ENCODE measurements at regions of chr17 and their contacts with region 1.

Region 1: GRCh38 chr17:17280613-17281549 is at the start of gene COPS3:
- DNase-seq: peak; percentile 96 to 98 (median 97)
- H3K4me3 ChIP-seq: peak within 1 kb of the TSS; percentile 62 to 99
- H3K4me3 Mint-ChIP-seq: peak within 1 kb of the TSS; percentile 90 to 96 (median 94)
- H3K27ac ChIP-seq: peak within 1 kb of the TSS; percentile 89
- H3K27ac Mint-ChIP-seq: peak within 1 kb of the TSS; percentile 93 to 98 (median 96)
- H3K4me1 ChIP-seq: peaks cover 33% of the 10 kb centered on the region
- H3K4me1 Mint-ChIP-seq: peaks cover 24 to 55% (median 40%) of the 10 kb centered on the region in 4 donors
- H3K27me3 ChIP-seq: no peaks in the 10 kb centered on the region
- H3K27me3 Mint-ChIP-seq: no peaks in the 10 kb centered on the region
- total RNA-seq, gene COPS3: 45.4 to 60.5 TPM

Region 2: GRCh38 chr17:16568541-16569357 is 712.1 kb before region 1 on chr17 and contains the start of gene ZNF287:
- CTCF ChIA-PET with region 1: no interaction called
- POLR2A ChIA-PET with region 1: no interaction called
- intact Hi-C with region 1: loop called (anchors 2 kb)
- DNase-seq: peak; percentile 91 to 96 (median 93)
- H3K4me3 ChIP-seq: peak within 1 kb of the TSS; percentile 33 to 87
- H3K4me3 Mint-ChIP-seq: peak within 1 kb of the TSS; percentile 85 to 89 (median 86)
- H3K27ac ChIP-seq: peak within 1 kb of the TSS; percentile 38
- H3K27ac Mint-ChIP-seq: peak within 1 kb of the TSS; percentile 79 to 98 (median 96)
- H3K4me1 ChIP-seq: peaks cover 14% of the 10 kb centered on the region
- H3K4me1 Mint-ChIP-seq: peaks cover 8 to 19% (median 12%) of the 10 kb centered on the region in 4 donors
- H3K27me3 ChIP-seq: no peaks in the 10 kb centered on the region
- H3K27me3 Mint-ChIP-seq: peaks cover 2 to 3% of the 10 kb centered on the region in 2 donors
- total RNA-seq, gene ZNF287: 16.7 to 17.9 TPM

Region 3: DNA sequence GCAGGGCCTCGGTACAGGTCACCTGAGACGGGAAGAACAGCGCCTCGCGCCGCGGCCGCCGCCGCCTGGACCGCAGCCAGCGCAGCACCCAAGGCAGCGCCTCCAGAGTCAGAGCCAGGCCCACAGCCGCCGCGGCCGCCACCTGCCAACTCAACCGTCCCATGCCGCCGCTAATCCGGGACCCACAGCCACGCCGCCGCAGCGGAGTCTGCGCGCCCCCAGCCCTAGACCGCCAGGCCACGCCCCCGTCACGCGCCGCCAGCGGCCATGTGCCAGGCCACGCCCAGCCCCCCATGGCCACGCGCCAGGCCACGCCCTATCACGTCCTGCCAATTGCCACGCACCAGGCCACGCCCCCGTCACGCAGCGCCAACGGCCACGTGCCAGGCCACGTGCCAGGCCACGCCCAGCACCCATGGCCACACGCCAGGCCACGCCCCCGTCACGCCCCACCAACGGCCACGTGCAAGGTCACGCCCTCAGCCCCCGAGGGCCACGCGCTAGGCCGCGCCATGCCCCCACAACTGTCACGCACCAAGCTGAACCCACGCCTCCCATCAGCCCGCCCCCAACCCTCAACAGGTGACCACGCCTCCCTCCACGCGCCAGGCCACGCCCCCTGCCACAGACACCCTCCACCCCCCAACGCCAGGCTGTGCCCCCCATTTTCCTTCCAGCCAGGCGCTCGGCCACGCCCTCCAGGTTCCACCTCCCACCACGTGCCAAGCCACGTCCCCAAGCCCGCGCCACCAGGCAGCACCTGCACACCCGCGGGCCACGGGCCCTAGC is 74.6 kb before region 1 on chr17 and contains the start of gene PLD6:
- CTCF ChIA-PET with region 1: no interaction called
- POLR2A ChIA-PET with region 1: no interaction called
- intact Hi-C with region 1: loop called (anchors 2 kb)
- DNase-seq: peak; percentile 94 to 95 (median 95)
- H3K4me3 ChIP-seq: peak within 1 kb of the TSS; percentile 61 to 72
- H3K4me3 Mint-ChIP-seq: peak within 1 kb of the TSS; percentile 85 to 94 (median 90)
- H3K27ac ChIP-seq: peak within 1 kb of the TSS; percentile 72
- H3K27ac Mint-ChIP-seq: peak within 1 kb of the TSS; percentile 91 to 97 (median 96)
- H3K4me1 ChIP-seq: peaks cover 28% of the 10 kb centered on the region
- H3K4me1 Mint-ChIP-seq: peaks cover 14 to 44% (median 31%) of the 10 kb centered on the region in 4 donors
- H3K27me3 ChIP-seq: no peaks in the 10 kb centered on the region
- H3K27me3 Mint-ChIP-seq: no peaks in the 10 kb centered on the region
- total RNA-seq, gene PLD6: 12.8 to 13.9 TPM

Region 4: DNA sequence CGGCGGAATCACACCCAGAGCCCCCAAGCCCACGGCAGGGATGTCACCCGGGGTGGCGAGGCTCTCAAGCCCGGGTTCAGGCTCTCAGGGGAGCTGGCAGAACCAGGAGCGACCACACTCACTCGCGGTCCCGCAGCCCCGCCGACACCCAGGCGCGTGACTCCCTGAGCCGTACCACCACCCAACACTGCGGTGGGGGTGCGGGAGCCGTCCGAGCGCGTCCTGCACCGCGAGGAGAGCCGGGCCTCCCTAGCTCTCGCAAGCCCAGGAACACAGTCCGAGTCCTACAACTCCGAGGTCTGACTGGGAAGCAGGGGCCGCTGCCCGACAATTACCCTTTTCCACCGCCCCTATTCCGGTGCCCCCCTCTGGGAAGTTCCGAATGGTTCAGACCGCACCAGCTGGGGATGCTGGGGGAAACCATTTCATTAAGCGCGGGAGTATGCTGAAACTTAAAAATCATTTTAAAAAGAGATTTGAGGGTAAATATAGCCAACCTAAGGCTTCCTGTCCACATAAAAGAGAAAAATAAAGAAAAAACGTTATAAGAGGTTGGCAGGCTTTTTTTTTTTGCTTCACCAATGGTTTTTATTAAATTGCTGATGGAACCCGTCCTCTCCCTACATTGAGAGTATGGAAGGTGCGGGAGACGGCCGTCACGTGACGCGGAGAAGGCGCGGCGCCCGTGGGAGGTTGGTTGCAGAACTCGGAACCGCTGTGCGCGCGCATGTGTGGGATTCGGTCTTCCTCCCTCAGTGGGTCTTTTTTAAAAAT is 43.7 kb before region 1 on chr17 and contains the start of gene FLCN:
- CTCF ChIA-PET with region 1: no interaction called
- POLR2A ChIA-PET with region 1: interaction called, 16 read pairs
- intact Hi-C with region 1: loop called (anchors 2 kb)
- DNase-seq: peak; percentile 91 to 95 (median 92)
- H3K4me3 ChIP-seq: peak within 1 kb of the TSS; percentile 79 to 82
- H3K4me3 Mint-ChIP-seq: peak within 1 kb of the TSS; percentile 90 to 97 (median 95)
- H3K27ac ChIP-seq: peak within 1 kb of the TSS; percentile 94
- H3K27ac Mint-ChIP-seq: peak within 1 kb of the TSS; percentile 91 to 99 (median 99)
- H3K4me1 ChIP-seq: peaks cover 25% of the 10 kb centered on the region
- H3K4me1 Mint-ChIP-seq: peaks cover 15 to 35% (median 23%) of the 10 kb centered on the region in 4 donors
- H3K27me3 ChIP-seq: no peaks in the 10 kb centered on the region
- H3K27me3 Mint-ChIP-seq: no peaks in the 10 kb centered on the region
- total RNA-seq, gene FLCN: 94.4 to 95.0 TPM

Region 5: GRCh38 chr17:17305281-17305801 is 24.5 kb after region 1 on chr17:
- CTCF ChIA-PET with region 1: interaction called, 5 read pairs
- POLR2A ChIA-PET with region 1: interaction called, 20 read pairs
- intact Hi-C with region 1: loop called (anchors 1 kb)
- DNase-seq: peak; percentile 36 to 63 (median 52)
- H3K4me3 ChIP-seq: no peak overlapping the region
- H3K4me3 Mint-ChIP-seq: peak overlapping the region; percentile 73 to 92 (median 86)
- H3K27ac ChIP-seq: no peak overlapping the region
- H3K27ac Mint-ChIP-seq: peak overlapping the region; percentile 76 to 95 (median 94)
- H3K4me1 ChIP-seq: peaks cover 42% of the 10 kb centered on the region
- H3K4me1 Mint-ChIP-seq: peaks cover 22 to 36% (median 32%) of the 10 kb centered on the region in 4 donors
- H3K27me3 ChIP-seq: no peaks in the 10 kb centered on the region
- H3K27me3 Mint-ChIP-seq: no peaks in the 10 kb centered on the region